Endothelial cell of umbilical vein (primary cell): ENCODE measurements at regions of chr12 and their contacts with region 1.

Region 1: GRCh38 chr12:32755654-32756475 is at the start of gene YARS2:
- DNase-seq: peak; percentile 95
- H3K4me3 ChIP-seq: peak within 1 kb of the TSS; percentile 60 to 90 (median 76)
- H3K27ac ChIP-seq: peak within 1 kb of the TSS; percentile 91
- H3K4me1 ChIP-seq: peaks cover 13% of the 10 kb centered on the region
- H3K27me3 ChIP-seq: no peaks in the 10 kb centered on the region
- CTCF ChIP-seq: peak; percentile 68 to 88
- POLR2A ChIP-seq: peak; percentile 97
- total RNA-seq, gene YARS2: 26.8 and 28.4 TPM in 2 replicates

Region 2: DNA sequence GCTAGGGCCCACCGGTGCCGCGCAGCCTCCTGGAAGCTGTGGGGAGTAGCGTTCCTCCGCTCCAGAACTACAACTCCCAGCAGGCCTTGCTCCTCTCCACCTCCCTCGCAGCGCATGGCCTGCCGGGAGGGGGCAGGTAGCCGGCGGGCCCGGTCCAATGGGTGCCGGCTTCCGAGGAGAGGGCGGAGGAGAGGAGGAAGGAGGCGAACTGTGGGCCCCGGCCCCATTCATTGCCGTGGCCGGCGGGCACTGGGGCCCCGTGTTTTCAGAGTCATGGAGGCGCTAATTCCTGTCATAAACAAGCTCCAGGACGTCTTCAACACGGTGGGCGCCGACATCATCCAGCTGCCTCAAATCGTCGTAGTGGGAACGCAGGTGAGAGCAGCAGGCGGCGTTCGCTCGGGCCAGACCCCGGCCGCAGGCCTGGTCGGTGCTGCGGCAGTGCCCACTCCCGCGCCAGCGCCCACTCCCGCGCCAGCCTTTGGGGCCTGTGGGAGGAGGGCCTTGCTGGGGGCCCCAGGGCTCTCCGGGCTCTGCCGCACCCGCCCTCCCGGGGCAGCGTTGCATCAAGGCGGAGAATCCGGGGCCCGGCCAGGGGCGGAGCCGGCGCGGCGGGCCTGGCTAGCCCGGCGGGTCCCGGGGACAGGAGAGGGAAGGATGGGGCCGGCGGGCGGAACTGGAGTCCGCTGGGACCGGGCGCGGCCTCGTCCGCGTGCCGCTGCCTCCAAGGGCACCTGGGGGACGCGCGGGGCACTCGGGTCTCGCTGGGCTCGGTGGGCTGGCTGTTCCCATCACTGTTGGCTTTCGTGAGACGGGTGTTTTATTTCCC is 76.6 kb before region 1 on chr12 and contains the start of gene DNM1L:
- CTCF ChIA-PET with region 1: interaction called, 3 read pairs
- POLR2A ChIA-PET with region 1: no interaction called
- dilution Hi-C with region 1: no loop called
- intact Hi-C with region 1: loop called (anchors 2 kb)
- DNase-seq: peak; percentile 96
- H3K4me3 ChIP-seq: peak within 1 kb of the TSS; percentile 30 to 91 (median 74)
- H3K27ac ChIP-seq: peak within 1 kb of the TSS; percentile 29
- H3K4me1 ChIP-seq: peaks cover 11% of the 10 kb centered on the region
- H3K27me3 ChIP-seq: no peaks in the 10 kb centered on the region
- CTCF ChIP-seq: peak in 1 of 2 donors; percentile 21
- POLR2A ChIP-seq: peak; percentile 91
- total RNA-seq, gene DNM1L: 90.1 and 103 TPM in 2 replicates

Region 3: GRCh38 chr12:32896432-32897273 is 140.8 kb after region 1 on chr12 and contains the start of gene PKP2:
- CTCF ChIA-PET with region 1: interaction called, 13 read pairs
- POLR2A ChIA-PET with region 1: interaction called, 3 read pairs
- dilution Hi-C with region 1: no loop called
- intact Hi-C with region 1: loop called (anchors 1 kb)
- DNase-seq: peak; percentile 36
- H3K4me3 ChIP-seq: peak within 1 kb of the TSS in 2 of 3 experiments; percentile 58 to 61
- H3K27ac ChIP-seq: no peak within 1 kb of the TSS
- H3K4me1 ChIP-seq: peaks cover 12% of the 10 kb centered on the region
- H3K27me3 ChIP-seq: peaks cover 8 to 15% of the 10 kb centered on the region in 2 experiments
- CTCF ChIP-seq: no peak
- POLR2A ChIP-seq: no peak
- total RNA-seq, gene PKP2: 6.5 and 9.1 TPM in 2 replicates

Region 4: DNA sequence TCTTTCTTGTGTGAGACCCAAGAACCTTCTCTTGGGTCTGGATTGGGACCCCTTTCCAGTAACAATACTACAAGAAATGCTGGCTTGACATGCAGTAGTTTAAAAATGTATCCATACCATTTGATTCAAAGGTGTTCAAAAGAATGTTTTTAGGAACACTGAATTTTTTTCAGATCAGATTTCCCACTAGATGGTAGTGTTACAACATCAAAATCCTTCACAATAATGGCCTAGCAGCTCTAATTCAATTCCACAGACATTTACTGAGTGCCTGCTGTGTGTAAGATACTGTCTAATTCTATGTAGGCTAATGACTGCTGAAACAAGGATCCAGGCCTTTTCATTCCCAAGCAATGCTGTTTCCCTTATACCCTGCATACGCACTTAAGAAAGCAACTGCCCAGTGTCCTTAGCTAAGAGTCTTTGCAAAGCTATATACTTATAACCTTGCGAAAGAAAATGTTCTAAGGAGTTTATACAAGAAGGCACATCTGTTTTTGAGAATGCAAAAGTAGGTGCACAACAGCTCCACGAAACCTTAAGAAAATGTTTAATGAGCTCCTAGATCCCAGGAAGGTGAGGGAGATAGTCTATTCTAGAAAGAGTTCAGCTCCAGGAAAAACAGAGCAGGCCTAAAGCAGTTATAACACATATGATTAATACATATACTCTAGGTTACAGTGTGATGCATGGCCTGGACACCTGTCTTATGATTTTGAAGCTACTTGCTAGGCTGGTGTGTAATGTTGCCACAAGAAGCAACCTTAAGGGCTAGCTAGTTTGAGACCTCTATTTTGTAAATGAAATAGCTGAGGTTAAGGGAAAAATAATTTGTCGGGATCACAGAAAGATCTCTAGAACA is 191.6 kb after region 1 on chr12:
- CTCF ChIA-PET with region 1: interaction called, 14 read pairs
- POLR2A ChIA-PET with region 1: no interaction called
- dilution Hi-C with region 1: no loop called
- intact Hi-C with region 1: no loop called
- DNase-seq: no peak
- H3K4me3 ChIP-seq: no peak overlapping the region
- H3K27ac ChIP-seq: no peak overlapping the region
- H3K4me1 ChIP-seq: no peaks in the 10 kb centered on the region
- H3K27me3 ChIP-seq: no peaks in the 10 kb centered on the region
- CTCF ChIP-seq: no peak
- POLR2A ChIP-seq: no peak

Region 5: DNA sequence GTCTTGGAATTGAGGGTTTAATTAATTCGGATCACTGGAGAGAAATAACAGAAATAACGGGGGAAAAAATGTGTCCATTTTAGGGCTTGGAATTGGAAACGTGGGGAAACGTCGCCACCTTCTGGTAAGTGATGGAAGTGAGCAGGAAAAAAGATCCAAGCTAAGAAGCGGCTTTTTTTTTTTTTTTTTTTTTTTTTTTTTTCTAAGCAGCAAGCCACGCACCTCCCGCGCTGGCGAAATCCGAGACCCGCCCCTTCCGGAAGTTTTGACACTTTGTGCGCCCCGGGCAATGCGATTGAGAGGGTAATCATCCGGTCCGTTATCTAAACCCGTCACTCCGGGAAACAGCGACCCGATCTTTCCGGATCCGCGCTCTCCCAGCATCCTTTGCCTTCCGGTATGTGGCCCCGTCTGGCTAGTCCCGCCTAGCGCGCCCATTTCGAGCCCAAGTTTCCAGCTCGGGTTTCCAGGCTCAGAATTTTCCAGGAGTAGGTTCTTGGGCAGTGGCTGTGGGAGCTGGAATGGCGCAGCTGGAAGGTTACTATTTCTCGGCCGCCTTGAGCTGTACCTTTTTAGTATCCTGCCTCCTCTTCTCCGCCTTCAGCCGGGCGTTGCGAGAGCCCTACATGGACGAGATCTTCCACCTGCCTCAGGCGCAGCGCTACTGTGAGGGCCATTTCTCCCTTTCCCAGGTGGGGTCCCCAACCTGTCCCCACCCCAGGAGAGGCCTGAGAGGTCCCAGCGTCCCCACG is 1266.4 kb after region 1 on chr12 and contains the start of gene ALG10:
- CTCF ChIA-PET with region 1: interaction called, 143 read pairs
- POLR2A ChIA-PET with region 1: interaction called, 7 read pairs
- dilution Hi-C with region 1: no loop called
- intact Hi-C with region 1: loop called (anchors 1 kb)
- DNase-seq: peak; percentile 96
- H3K4me3 ChIP-seq: peak within 1 kb of the TSS; percentile 40 to 83 (median 72)
- H3K27ac ChIP-seq: peak within 1 kb of the TSS; percentile 87
- H3K4me1 ChIP-seq: peaks cover 7% of the 10 kb centered on the region
- H3K27me3 ChIP-seq: peaks cover 0 to 3% of the 10 kb centered on the region in 2 experiments
- CTCF ChIP-seq: peak; percentile 54 to 63
- POLR2A ChIP-seq: peak; percentile 80
- total RNA-seq, gene ALG10: 13.0 and 13.2 TPM in 2 replicates